ENCODE measurements at regions of chr9 and their contacts with region 1.

Region 1: GRCh38 chr9:33374634-33375213 is 27.6 kb downstream of the AQP7 start:
- DNase-seq: peak; percentile 26 to 91 (median 77)

Region 2: GRCh38 chr9:33416996-33417395 is 42.3 kb after region 1 on chr9:
- intact Hi-C with region 1: loop called (anchors 1 kb)
- DNase-seq: no peak

Region 3: GRCh38 chr9:33466565-33467495 is 92.1 kb after region 1 on chr9:
- intact Hi-C with region 1: loop called (anchors 10 kb)
- DNase-seq: peak; percentile 38 to 95 (median 66)

Region 4: GRCh38 chr9:34651876-34652601 is 1277.3 kb after region 1 on chr9 and contains the start of gene IL11RA:
- intact Hi-C with region 1: no loop called
- DNase-seq: peak; percentile 66 to 98 (median 82)

Measured in posterior cingulate gyrus (tissue), 11 donors.